Breast epithelium (tissue), 4 donors: ENCODE measurements at regions of chr3 and their contacts with region 1.

Region 1: DNA sequence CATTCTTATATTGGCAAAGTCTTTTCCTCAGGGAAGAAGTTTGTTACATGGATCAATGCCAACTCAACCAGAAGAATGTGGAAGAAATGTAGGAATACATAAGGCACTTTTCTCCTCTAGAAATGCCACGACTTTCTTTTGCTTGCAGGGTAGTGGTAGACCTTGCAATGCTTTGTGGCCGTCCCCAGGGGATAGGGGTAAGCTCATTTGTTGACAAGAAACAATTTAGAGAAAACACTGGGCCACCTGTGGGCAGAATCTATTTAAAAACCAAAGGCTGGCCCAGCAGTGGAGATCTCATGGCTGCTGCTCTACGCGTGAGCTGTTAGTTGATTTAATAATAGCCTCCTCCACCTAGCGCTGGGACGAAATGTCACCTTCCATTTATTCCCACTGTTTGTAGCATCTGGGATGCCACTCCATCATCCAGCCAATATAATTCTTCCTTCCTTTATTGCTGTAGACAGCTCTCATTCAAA is 64.6 kb upstream of the PFN2 start:
- DNase-seq: no peak
- H3K4me3 ChIP-seq: no peak overlapping the region
- H3K27ac ChIP-seq: no peak overlapping the region
- H3K4me1 ChIP-seq: no peaks in the 10 kb centered on the region
- H3K27me3 ChIP-seq: no peaks in the 10 kb centered on the region
- CTCF ChIP-seq: no peak
- POLR2A ChIP-seq: no peak

Region 2: DNA sequence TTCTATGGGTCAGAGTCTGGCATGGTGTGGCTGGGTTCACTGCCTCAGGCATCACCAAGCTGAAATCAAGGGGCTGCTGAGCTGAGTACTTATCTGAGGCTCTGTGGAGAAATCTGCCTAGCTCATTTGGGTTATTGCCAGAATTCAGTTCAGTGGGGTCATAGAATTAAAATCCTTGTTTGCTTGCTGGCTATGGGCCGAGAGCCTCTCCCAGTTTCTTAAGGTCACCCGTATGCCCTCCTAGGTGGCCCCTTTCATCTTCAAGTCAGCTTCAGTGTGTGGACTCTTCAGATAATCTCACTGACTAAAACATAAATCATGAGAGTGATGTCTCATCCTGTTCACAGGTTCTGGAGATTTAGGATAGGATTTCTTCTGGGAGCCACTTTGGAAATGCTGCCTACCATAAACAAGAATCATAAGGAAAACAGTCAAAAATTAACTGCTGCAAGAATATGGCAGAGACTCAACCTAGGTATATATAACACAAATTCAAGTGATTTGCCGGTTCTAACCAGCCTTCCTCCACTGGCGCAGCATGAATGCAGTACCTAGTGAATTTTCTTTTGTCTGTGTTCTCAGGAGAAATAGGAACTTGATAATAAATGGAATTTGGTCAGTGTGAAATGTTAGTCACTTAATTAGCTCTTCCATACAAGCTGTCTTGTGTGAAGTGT is 819.0 kb before region 1 on chr3:
- intact Hi-C with region 1: loop called (anchors 5 kb)
- DNase-seq: no peak
- H3K4me3 ChIP-seq: no peak overlapping the region
- H3K27ac ChIP-seq: peak overlapping the region in 1 of 2 donors; percentile 22
- H3K4me1 ChIP-seq: no peaks in the 10 kb centered on the region
- H3K27me3 ChIP-seq: no peaks in the 10 kb centered on the region
- CTCF ChIP-seq: no peak
- POLR2A ChIP-seq: no peak

Region 3: GRCh38 chr3:149527531-149528339 is 507.6 kb before region 1 on chr3:
- intact Hi-C with region 1: loop called (anchors 5 kb)
- DNase-seq: no peak
- H3K4me3 ChIP-seq: no peak overlapping the region
- H3K27ac ChIP-seq: peak overlapping the region; percentile 26 to 46
- H3K4me1 ChIP-seq: no peaks in the 10 kb centered on the region
- H3K27me3 ChIP-seq: no peaks in the 10 kb centered on the region
- CTCF ChIP-seq: no peak
- POLR2A ChIP-seq: no peak

Region 4: GRCh38 chr3:150049317-150049716 is 14.0 kb after region 1 on chr3:
- intact Hi-C with region 1: no loop called
- DNase-seq: no peak
- H3K4me3 ChIP-seq: no peak overlapping the region
- H3K27ac ChIP-seq: no peak overlapping the region
- H3K4me1 ChIP-seq: no peaks in the 10 kb centered on the region
- H3K27me3 ChIP-seq: no peaks in the 10 kb centered on the region
- CTCF ChIP-seq: no peak
- POLR2A ChIP-seq: no peak